ENCODE measurements at regions of chr18 and their contacts with region 1.

Region 1: DNA sequence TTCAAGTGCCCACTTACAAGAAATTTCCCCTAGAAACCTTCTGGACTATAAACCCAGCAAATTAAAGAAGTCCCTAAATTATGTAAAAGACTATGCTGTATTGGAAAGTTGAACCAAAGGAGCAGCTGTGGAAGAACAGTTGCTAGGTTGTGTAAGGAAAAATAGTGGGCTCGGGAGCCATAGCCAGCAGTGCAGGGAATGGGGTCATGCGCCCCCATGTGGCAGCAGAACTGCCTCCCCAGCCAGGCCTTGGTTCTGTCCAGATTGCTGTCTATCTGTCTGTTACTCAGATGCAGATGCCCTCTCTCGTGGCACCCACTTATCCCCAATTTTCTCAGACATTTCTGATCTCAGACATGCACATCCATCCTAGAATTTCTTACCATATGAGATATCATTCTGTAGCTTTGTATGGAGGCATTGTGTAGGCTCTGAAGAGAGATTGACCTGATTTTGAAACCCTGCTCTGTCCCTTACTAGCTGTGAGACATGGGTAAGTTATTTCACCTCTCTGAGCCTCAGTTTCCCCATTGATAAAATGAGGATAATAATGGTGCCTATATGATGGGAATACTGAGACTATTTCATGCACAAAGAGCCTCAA is 258.3 kb downstream of the SS18 start:
- H3K4me3 Mint-ChIP-seq: no peak overlapping the region
- H3K27ac Mint-ChIP-seq: no peak overlapping the region
- H3K4me1 Mint-ChIP-seq: no peaks in the 10 kb centered on the region
- H3K27me3 Mint-ChIP-seq: no peaks in the 10 kb centered on the region

Region 2: GRCh38 chr18:24600076-24600654 is 1231.9 kb before region 1 on chr18:
- intact Hi-C with region 1: loop called (anchors 5 kb)
- H3K4me3 Mint-ChIP-seq: no peak overlapping the region
- H3K27ac Mint-ChIP-seq: no peak overlapping the region
- H3K4me1 Mint-ChIP-seq: no peaks in the 10 kb centered on the region
- H3K27me3 Mint-ChIP-seq: no peaks in the 10 kb centered on the region

Region 3: DNA sequence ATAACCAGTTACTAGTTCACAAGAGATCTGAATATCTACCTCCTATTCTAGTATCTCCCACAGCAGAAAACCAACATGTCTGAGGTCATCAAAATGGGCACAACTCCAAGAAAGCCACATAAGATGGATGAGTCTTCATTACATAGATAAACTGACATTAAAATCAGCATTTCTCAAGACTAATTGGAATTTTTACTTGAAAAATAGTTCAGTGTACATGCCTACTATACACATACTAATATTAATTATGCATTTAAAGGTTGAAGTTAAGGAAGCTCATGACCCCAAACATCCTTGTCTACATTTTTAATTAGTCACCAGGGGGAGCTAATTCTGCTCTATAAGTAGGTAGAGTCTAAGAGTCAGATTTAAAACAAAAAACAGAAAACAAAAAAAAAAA is 522.1 kb before region 1 on chr18:
- intact Hi-C with region 1: loop called (anchors 10 kb)
- H3K4me3 Mint-ChIP-seq: no peak overlapping the region
- H3K27ac Mint-ChIP-seq: no peak overlapping the region
- H3K4me1 Mint-ChIP-seq: no peaks in the 10 kb centered on the region
- H3K27me3 Mint-ChIP-seq: no peaks in the 10 kb centered on the region

Region 4: GRCh38 chr18:25326361-25326952 is 505.6 kb before region 1 on chr18:
- intact Hi-C with region 1: no loop called
- H3K4me3 Mint-ChIP-seq: no peak overlapping the region
- H3K27ac Mint-ChIP-seq: no peak overlapping the region
- H3K4me1 Mint-ChIP-seq: peaks cover 19% of the 10 kb centered on the region
- H3K27me3 Mint-ChIP-seq: no peaks in the 10 kb centered on the region

Measured in dendritic cell treated with granulocyte-macrophage colony-stimulating factor and Interleukin-4, amounts not matched to agents 40 ng/mL and 50 ng/mL, for 4 days (primary cell).